ENCODE measurements at regions of chr14 and their contacts with region 1.

Region 1: GRCh38 chr14:58297762-58298476 is 436 bp upstream of the ARID4A start:
- DNase-seq: peak; percentile 98 to 99
- ATAC-seq: peak; percentile 93 to 98 (median 97)
- H3K4me3 ChIP-seq: peak overlapping the region; percentile 85 to 99 (median 94)
- H3K27ac ChIP-seq: peak overlapping the region; percentile 84 to 98 (median 96)
- H3K4me1 ChIP-seq: peaks cover 4 to 66% (median 53%) of the 10 kb centered on the region in 9 donors
- H3K27me3 ChIP-seq: no peaks in the 10 kb centered on the region
- CTCF ChIP-seq: peak in 2 of 9 donors; percentile 25 to 36

Region 2: GRCh38 chr14:58244556-58245387 is 53.1 kb before region 1 on chr14 and contains the start of gene PSMA3:
- intact Hi-C with region 1: loop called in 9 of 10 experiments (anchors 2 to 10 kb)
- DNase-seq: peak; percentile 97 to 98
- ATAC-seq: peak; percentile 94 to 99 (median 96)
- H3K4me3 ChIP-seq: peak within 1 kb of the TSS; percentile 60 to 95 (median 82)
- H3K27ac ChIP-seq: peak within 1 kb of the TSS; percentile 89 to 98 (median 94)
- H3K4me1 ChIP-seq: peaks cover 7 to 45% (median 34%) of the 10 kb centered on the region in 9 donors
- H3K27me3 ChIP-seq: no peaks in the 10 kb centered on the region
- CTCF ChIP-seq: peak in 2 of 9 donors; percentile 25 to 30
- total RNA-seq, gene PSMA3: 122 to 235 (median 150) TPM

Region 3: GRCh38 chr14:58331111-58331510 is 33.2 kb after region 1 on chr14:
- intact Hi-C with region 1: loop called in 1 of 10 experiments (anchors 5 kb)
- DNase-seq: peak; percentile 50 to 94
- ATAC-seq: peak; percentile 73 to 97 (median 86)
- H3K4me3 ChIP-seq: peak overlapping the region in 4 of 10 donors; percentile 2 to 24 (median 8)
- H3K27ac ChIP-seq: peak overlapping the region in 5 of 10 donors; percentile 3 to 50 (median 43)
- H3K4me1 ChIP-seq: peaks cover 0 to 16% (median 12%) of the 10 kb centered on the region in 9 donors
- H3K27me3 ChIP-seq: no peaks in the 10 kb centered on the region
- CTCF ChIP-seq: no peak

Region 4: DNA sequence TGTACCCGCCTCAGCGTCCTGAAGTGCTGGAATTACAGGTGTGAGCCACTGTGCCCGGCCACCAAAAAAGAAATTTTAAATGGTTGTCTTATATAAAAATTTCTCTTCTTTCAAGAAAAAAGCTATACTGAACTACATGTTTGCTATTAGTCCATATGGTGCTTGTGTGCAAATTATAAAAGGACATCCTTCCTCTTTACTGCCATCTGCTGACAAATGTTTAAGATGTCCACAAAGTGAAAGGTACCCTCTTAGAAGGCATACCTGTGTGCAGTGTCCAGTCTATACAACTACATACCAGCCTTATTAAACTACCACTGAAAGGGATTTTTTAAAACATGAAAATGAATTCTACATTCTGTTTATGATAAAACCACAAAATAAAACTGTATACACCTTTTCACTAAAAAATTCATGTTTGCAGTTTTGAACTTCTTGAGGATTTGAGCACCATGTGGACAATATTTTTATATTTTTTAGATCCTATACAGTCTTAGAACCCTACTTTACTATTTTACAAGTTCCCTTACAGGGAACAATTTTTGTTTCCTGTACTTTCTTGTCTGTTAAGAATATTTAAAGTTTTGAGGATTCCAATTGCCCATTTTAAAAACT is 65.0 kb after region 1 on chr14:
- intact Hi-C with region 1: loop called in 1 of 10 experiments (anchors 10 kb)
- DNase-seq: no peak
- ATAC-seq: no peak
- H3K4me3 ChIP-seq: no peak overlapping the region
- H3K27ac ChIP-seq: no peak overlapping the region
- H3K4me1 ChIP-seq: no peaks in the 10 kb centered on the region
- H3K27me3 ChIP-seq: no peaks in the 10 kb centered on the region
- CTCF ChIP-seq: peak in 6 of 9 donors; percentile 33 to 47 (median 38)